MCF 10A (cell line): ENCODE measurements at regions of chr5 and their contacts with region 1.

Region 1: DNA sequence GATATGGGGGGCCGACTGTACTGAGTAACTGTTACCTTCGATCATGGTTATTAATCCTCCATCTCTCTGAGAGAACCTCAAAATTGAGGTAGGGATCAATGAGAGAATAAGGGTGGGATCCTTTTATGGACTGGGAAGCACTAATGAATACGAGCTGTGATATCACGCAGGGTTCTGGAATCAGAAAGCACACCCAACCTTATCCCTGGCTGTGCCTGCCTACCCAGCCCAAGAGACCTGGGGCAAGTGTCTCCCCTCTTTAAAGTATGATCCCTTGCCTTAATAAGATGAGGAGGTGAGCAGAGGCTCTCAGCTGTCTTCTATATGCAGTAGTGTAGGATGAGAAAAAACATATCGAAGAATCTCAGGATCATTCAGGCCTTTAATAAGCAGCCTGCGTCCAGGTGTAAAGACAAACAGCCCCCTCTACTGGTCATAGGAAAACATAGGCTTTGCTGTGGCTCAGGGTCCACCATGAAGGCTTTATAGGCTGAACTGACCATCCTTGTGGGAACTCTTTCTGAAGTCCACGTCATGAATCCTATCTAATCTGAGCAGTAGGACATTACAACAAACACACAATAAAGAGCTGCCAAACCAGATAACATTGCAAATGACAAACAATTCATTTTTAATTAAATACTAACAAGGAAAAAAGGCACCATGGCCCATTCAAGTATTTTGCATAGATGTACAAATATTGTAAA is 16.8 kb downstream of the NIPAL4 start:
- DNase-seq: peak; percentile 93
- H3K4me3 Mint-ChIP-seq: no peak overlapping the region
- H3K27ac Mint-ChIP-seq: no peak overlapping the region
- H3K4me1 Mint-ChIP-seq: no peaks in the 10 kb centered on the region
- H3K27me3 Mint-ChIP-seq: no peaks in the 10 kb centered on the region
- CTCF ChIP-seq: peak; percentile 97

Region 2: DNA sequence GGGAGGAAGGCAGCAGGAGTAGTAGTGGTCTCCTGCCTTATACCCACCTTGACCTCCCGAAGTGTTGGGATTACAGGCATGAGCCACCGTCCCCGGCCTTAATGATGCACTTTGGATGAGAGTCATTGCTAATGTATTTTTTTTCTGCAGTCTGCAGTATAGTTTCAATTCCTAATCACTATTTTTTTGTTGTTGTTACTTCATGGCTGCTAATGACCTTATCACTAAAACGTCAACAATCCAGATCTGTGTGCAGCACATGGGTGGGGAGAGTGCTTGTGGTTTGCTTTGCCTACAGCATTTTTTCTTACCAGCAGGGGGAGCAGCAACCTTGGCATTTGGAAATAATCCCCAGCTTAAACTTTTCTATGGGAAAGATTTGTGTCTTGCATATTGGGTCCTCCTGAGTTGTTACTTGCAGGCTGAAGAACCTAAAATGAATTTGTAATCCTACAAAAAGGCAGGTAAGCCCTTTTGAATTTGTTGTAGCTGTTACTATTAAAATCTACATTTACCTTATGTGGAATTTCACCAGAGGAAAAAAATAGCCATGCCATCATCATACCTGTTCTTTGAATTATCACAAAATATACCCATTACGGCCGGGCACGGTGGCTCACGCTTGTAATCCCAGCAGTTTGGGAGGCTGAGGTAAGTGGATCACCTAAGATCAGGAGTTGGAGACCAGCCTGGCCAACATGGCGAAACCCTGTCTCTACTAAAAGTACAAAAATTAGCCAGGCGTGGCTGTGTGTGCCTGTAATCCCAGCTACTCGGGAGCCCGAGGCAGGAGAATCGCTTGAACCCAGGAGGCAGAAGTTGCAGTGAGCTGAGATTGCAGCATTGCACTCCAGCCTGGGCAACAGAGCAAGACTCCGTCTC is 327.9 kb before region 1 on chr5:
- CTCF ChIA-PET with region 1: interaction called, 8 read pairs
- POLR2A ChIA-PET with region 1: no interaction called
- intact Hi-C with region 1: loop called (anchors 1 kb)
- DNase-seq: peak; percentile 81
- H3K4me3 Mint-ChIP-seq: no peak overlapping the region
- H3K27ac Mint-ChIP-seq: no peak overlapping the region
- H3K4me1 Mint-ChIP-seq: peaks cover 6% of the 10 kb centered on the region
- H3K27me3 Mint-ChIP-seq: no peaks in the 10 kb centered on the region
- CTCF ChIP-seq: peak; percentile 90

Region 3: DNA sequence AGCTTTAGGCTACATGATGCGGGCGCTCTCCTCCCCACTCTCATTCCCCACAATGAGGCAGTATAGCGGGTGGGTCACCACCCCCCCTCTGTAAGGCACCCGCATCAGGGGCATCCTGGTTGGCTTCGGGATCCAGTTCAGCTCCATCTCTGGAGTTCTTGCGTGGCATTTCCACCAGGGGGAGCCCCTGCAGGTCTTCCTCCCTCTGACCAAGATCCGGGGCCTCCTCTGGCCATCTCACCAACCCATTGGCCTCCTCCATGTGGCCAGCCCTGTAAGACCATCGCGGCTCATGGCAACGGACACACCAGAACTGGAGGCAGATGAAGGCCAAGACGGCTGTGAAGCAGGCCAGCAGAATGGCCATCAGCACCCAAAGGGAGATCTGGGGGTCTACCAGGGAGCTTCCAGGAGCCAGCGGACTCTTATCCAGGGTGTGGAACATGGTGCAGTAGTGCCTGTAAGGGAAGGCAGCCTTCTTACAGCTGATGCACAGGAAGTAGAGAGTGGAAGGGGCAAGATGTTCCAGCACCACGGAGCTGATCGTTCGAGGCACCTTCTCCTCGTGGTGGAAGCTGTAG is 133.9 kb before region 1 on chr5:
- CTCF ChIA-PET with region 1: interaction called, 76 read pairs
- POLR2A ChIA-PET with region 1: interaction called, 3 read pairs
- intact Hi-C with region 1: loop called (anchors 1 kb)
- DNase-seq: peak; percentile 66
- H3K4me3 Mint-ChIP-seq: no peak overlapping the region
- H3K27ac Mint-ChIP-seq: no peak overlapping the region
- H3K4me1 Mint-ChIP-seq: no peaks in the 10 kb centered on the region
- H3K27me3 Mint-ChIP-seq: no peaks in the 10 kb centered on the region
- CTCF ChIP-seq: peak; percentile 82

Region 4: GRCh38 chr5:157400741-157401495 is 75.9 kb before region 1 on chr5:
- CTCF ChIA-PET with region 1: interaction called, 10 read pairs
- POLR2A ChIA-PET with region 1: no interaction called
- intact Hi-C with region 1: no loop called
- DNase-seq: no peak
- H3K4me3 Mint-ChIP-seq: no peak overlapping the region
- H3K27ac Mint-ChIP-seq: no peak overlapping the region
- H3K4me1 Mint-ChIP-seq: no peaks in the 10 kb centered on the region
- H3K27me3 Mint-ChIP-seq: no peaks in the 10 kb centered on the region
- CTCF ChIP-seq: no peak

Region 5: GRCh38 chr5:157449011-157449723 is 27.7 kb before region 1 on chr5:
- CTCF ChIA-PET with region 1: interaction called, 29 read pairs
- POLR2A ChIA-PET with region 1: no interaction called
- intact Hi-C with region 1: no loop called
- DNase-seq: peak; percentile 47
- H3K4me3 Mint-ChIP-seq: no peak overlapping the region
- H3K27ac Mint-ChIP-seq: no peak overlapping the region
- H3K4me1 Mint-ChIP-seq: peaks cover 19% of the 10 kb centered on the region
- H3K27me3 Mint-ChIP-seq: no peaks in the 10 kb centered on the region
- CTCF ChIP-seq: no peak

Region 6: DNA sequence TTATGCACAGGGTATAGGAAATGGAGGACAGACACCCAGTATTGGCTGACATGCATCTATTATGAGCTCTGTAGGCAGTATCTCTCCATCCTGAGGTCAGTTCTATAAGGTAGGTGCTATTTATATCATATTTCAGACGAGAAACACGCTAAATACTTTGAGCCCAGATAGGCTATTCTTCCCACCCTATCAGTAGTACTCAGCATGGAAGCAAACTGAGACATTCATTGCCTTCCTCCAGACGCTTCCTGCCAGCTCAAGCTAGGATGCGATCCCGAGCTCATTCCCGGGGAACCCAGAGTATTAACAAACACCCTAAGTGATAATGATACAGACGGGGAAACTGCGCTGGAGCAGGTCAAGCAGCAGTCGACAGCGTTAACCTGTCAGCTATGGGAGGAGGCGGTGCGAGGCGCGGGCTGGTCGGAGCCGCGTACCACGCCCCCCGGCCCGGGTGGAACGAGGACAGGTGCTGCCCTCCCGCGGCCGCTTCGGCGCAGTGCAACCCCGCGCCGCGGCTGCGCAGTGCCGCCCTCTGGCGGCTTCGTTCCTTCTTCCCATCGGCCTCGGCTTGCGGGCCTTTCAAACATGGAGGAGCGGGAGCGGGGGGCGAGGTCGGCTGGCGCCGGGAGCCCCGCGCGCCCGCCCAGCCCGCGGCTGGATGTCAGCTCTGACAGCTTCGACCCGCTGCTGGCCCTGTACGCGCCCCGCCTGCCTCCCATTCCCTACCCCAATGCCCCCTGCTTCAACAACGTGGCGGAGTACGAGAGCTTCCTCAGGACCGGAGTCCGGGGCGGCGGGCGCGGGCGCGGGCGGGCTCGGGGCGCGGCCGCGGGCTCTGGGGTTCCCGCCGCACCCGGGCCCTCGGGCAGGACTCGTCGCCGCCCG is 266.6 kb after region 1 on chr5 and contains the start of gene LSM11:
- CTCF ChIA-PET with region 1: interaction called, 11 read pairs
- POLR2A ChIA-PET with region 1: no interaction called
- intact Hi-C with region 1: loop called (anchors 1 kb)
- DNase-seq: peak; percentile 90
- H3K4me3 Mint-ChIP-seq: peak within 1 kb of the TSS; percentile 78
- H3K27ac Mint-ChIP-seq: peak within 1 kb of the TSS; percentile 68
- H3K4me1 Mint-ChIP-seq: peaks cover 18% of the 10 kb centered on the region
- H3K27me3 Mint-ChIP-seq: no peaks in the 10 kb centered on the region
- CTCF ChIP-seq: peak; percentile 100
- total RNA-seq, gene LSM11: 3.4 and 4.5 TPM in 2 replicates